Caco-2 (cell line): ENCODE measurements at regions of chr3 and their contacts with region 1.

Region 1: GRCh38 chr3:138479438-138479863 is 45.0 kb downstream of the ESYT3 start:
- DNase-seq: peak in 1 of 2 experiments; percentile 60
- H3K4me3 ChIP-seq: no peak overlapping the region
- H3K4me3 Mint-ChIP-seq: no peak overlapping the region
- H3K27ac Mint-ChIP-seq: no peak overlapping the region
- H3K4me1 ChIP-seq: no peaks in the 10 kb centered on the region
- H3K4me1 Mint-ChIP-seq: no peaks in the 10 kb centered on the region
- H3K27me3 ChIP-seq: no peaks in the 10 kb centered on the region
- H3K27me3 Mint-ChIP-seq: no peaks in the 10 kb centered on the region
- CTCF ChIP-seq: peak; percentile 71 to 81

Region 2: DNA sequence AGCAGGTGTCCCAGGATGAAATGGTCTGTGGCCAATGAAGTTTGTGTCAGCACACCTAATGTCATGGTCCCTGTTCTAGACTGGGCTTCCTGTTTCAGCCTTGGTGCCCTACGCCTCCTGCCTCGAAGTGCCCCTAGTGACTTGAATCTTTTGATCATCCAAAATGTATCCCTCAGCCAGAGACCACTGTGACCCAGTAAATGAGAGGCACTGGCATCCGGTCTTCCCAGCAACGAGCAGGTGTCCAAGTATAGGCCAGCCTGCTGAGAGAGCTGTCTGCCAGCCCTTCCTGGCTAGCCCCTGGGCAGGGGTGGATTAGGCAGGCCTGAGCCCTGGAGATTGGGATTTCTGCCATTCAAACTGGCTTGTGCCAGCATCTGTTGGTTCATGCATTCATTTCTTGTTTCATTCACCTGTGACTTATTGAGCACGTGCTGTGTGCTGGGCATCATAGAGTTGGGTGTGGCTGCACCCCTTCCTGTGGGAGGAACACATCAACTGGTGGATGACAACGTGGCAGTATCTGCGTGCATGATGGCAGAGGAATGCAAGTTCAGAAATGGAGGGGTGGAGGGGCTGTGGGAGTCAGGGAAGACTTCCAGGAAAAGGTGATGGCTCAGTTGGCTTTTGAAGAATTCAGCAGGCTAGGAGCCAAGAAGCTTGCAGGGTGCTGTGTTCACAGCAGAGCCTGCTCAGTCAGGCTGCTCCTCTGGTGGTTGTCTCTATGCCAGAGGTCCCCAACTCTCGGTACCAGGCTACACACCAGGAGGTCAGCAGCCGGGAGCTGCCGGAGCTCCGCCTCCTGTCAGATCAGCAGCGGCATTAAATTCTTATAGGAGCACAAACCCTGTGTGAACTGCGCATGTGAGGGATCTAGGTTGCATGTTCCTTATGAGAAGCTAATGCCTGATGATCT is 23.4 kb before region 1 on chr3:
- CTCF ChIA-PET with region 1: no interaction called
- POLR2A ChIA-PET with region 1: no interaction called
- intact Hi-C with region 1: no loop called
- DNase-seq: peak in 1 of 2 experiments; percentile 4
- H3K4me3 ChIP-seq: no peak overlapping the region
- H3K4me3 Mint-ChIP-seq: no peak overlapping the region
- H3K27ac Mint-ChIP-seq: no peak overlapping the region
- H3K4me1 ChIP-seq: 0 out of 2 replicates have a peak, but pooled peaks cover 4% of the 10 kb centered on the region
- H3K4me1 Mint-ChIP-seq: peaks cover 7% of the 10 kb centered on the region
- H3K27me3 ChIP-seq: no peaks in the 10 kb centered on the region
- H3K27me3 Mint-ChIP-seq: no peaks in the 10 kb centered on the region
- CTCF ChIP-seq: no peak

Region 3: DNA sequence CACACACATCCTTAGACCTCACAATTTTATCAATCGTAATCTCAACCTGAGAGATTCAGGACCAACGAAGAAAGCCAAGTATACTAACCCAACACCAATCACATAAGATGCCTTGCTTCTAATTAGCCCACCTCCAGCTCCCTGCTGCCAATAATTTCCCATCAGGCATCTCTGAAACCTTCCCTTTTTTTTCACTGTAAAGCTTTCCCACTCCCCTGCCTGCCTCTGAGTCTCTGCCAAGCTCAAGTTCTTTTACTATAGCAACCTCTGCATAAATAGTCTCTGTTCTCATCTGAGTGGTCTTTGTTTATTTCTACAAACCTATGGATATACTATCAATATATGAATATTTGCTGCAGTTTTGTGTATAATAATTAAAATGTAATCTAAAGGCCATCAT is 268.7 kb after region 1 on chr3:
- CTCF ChIA-PET with region 1: no interaction called
- POLR2A ChIA-PET with region 1: no interaction called
- intact Hi-C with region 1: no loop called
- DNase-seq: no peak
- H3K4me3 ChIP-seq: no peak overlapping the region
- H3K4me3 Mint-ChIP-seq: no peak overlapping the region
- H3K27ac Mint-ChIP-seq: no peak overlapping the region
- H3K4me1 ChIP-seq: no peaks in the 10 kb centered on the region
- H3K4me1 Mint-ChIP-seq: no peaks in the 10 kb centered on the region
- H3K27me3 ChIP-seq: no peaks in the 10 kb centered on the region
- H3K27me3 Mint-ChIP-seq: no peaks in the 10 kb centered on the region
- CTCF ChIP-seq: no peak

Region 4: DNA sequence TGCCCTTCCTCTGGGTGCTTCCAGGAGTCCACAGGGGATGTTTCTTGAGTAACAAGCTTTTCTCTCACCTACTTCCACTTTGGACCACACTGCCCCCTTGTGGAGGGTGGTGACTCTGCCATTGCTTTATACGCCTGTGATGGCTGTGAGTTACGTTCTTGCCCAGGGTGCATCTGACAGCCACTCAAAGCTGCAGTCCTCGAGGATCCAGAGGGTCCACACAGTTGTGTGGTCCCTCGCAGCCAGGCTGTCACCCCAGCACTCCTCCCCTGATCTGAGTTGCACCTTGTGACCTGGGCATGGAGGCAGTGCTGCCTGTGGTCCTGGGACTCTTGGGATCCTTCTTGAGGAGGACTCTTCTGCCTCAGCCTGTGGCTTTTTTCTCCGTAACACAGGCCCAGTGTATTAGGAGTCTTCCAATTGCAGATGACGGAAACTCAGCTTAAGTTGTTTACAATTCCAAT is 444.1 kb after region 1 on chr3:
- CTCF ChIA-PET with region 1: interaction called, 11 read pairs
- POLR2A ChIA-PET with region 1: no interaction called
- intact Hi-C with region 1: loop called (anchors 2 kb)
- DNase-seq: peak; percentile 82 to 89
- H3K4me3 ChIP-seq: no peak overlapping the region
- H3K4me3 Mint-ChIP-seq: no peak overlapping the region
- H3K27ac Mint-ChIP-seq: no peak overlapping the region
- H3K4me1 ChIP-seq: no peaks in the 10 kb centered on the region
- H3K4me1 Mint-ChIP-seq: no peaks in the 10 kb centered on the region
- H3K27me3 ChIP-seq: no peaks in the 10 kb centered on the region
- H3K27me3 Mint-ChIP-seq: no peaks in the 10 kb centered on the region
- CTCF ChIP-seq: peak; percentile 81 to 86